IMR-90 (cell line): ENCODE measurements at regions of chr15 and their contacts with region 1.

Region 1: GRCh38 chr15:69853581-69853980 is 244.1 kb downstream of the TLE3 start:
- DNase-seq: peak; percentile 84
- ATAC-seq: peak; percentile 71
- H3K4me3 ChIP-seq: no peak overlapping the region
- H3K27ac ChIP-seq: peak overlapping the region; percentile 73
- H3K4me1 ChIP-seq: peaks cover 24% of the 10 kb centered on the region
- H3K27me3 ChIP-seq: no peaks in the 10 kb centered on the region
- CTCF ChIP-seq: no peak
- POLR2A ChIP-seq: peak; percentile 34; the same call in 1 of the 2 replicates
- RAD21 ChIP-seq: 0 out of 2 replicates have a peak, but pooled peaks have one; percentile 5

Region 2: DNA sequence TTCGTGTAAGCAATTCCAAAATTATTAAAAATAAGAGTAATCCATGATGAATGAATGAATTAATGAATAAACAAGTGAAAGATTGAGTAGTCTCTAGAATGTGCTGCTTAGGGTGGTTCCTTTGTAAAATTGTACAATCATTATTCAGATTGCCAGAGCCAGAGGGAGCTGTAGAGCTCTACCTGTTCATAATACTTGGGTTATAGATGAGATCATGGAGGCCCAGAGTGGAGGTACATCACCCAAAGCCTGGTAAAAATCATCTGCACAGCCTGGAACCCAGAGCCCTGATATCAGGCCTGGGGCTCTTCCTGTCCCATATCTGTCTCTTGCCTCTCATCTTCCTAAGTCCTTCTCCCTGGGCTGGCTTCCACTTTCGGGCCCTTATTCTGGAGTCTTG is 103.8 kb before region 1 on chr15:
- CTCF ChIA-PET with region 1: no interaction called
- POLR2A ChIA-PET with region 1: no interaction called
- dilution Hi-C with region 1: no loop called
- in situ Hi-C with region 1: no loop called
- intact Hi-C with region 1: no loop called
- DNase-seq: no peak
- ATAC-seq: no peak
- H3K4me3 ChIP-seq: no peak overlapping the region
- H3K27ac ChIP-seq: no peak overlapping the region
- H3K4me1 ChIP-seq: no peaks in the 10 kb centered on the region
- H3K27me3 ChIP-seq: peaks cover 47% of the 10 kb centered on the region
- CTCF ChIP-seq: peak; percentile 20; the same call in 1 of the 2 replicates
- POLR2A ChIP-seq: no peak
- RAD21 ChIP-seq: peak; percentile 20; the same call in 1 of the 2 replicates

Region 3: DNA sequence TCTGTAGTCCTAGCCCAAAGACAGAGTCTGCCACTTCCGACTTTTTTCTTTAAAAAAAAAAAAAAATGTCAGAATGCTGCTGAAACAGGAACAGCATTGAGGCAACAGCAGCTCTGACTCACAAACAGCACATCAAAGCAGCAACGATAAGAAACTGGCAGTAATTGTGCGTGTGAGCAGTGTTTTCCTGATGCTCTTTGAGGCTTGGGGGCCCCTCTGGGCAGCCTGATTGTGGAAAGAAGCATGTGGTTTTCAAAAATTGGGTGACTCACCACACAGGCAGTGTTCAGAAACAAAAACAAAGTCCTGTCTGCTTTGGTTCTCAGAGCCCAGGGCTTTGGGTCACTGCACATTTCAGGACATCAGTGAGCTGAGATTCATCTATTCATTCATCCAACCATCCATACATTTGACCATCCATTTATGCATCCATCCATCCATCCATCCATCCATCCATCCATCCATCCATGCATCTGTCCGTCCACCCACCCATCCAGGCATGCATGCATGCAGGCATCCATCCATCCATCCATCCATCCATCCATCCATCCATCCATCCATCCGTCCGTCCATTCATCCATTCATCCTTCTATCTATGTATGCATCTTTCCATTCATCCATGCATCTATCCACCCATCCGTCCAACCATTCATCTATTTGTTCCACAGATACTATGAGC is 92.6 kb before region 1 on chr15:
- CTCF ChIA-PET with region 1: no interaction called
- POLR2A ChIA-PET with region 1: no interaction called
- dilution Hi-C with region 1: no loop called
- in situ Hi-C with region 1: no loop called
- intact Hi-C with region 1: loop called (anchors 2 kb)
- DNase-seq: peak; percentile 99
- ATAC-seq: peak; percentile 90
- H3K4me3 ChIP-seq: no peak overlapping the region
- H3K27ac ChIP-seq: no peak overlapping the region
- H3K4me1 ChIP-seq: peaks cover 12% of the 10 kb centered on the region
- H3K27me3 ChIP-seq: peaks cover 1% of the 10 kb centered on the region
- CTCF ChIP-seq: no peak
- POLR2A ChIP-seq: no peak
- RAD21 ChIP-seq: no peak

Region 4: GRCh38 chr15:69841113-69841828 is 12.3 kb before region 1 on chr15:
- CTCF ChIA-PET with region 1: no interaction called
- POLR2A ChIA-PET with region 1: no interaction called
- dilution Hi-C with region 1: no loop called
- in situ Hi-C with region 1: no loop called
- intact Hi-C with region 1: no loop called
- DNase-seq: no peak
- ATAC-seq: no peak
- H3K4me3 ChIP-seq: no peak overlapping the region
- H3K27ac ChIP-seq: no peak overlapping the region
- H3K4me1 ChIP-seq: no peaks in the 10 kb centered on the region
- H3K27me3 ChIP-seq: peaks cover 19% of the 10 kb centered on the region
- CTCF ChIP-seq: no peak
- POLR2A ChIP-seq: no peak
- RAD21 ChIP-seq: no peak

Region 5: GRCh38 chr15:70165716-70166284 is 312.2 kb after region 1 on chr15:
- CTCF ChIA-PET with region 1: no interaction called
- POLR2A ChIA-PET with region 1: no interaction called
- dilution Hi-C with region 1: no loop called
- in situ Hi-C with region 1: no loop called
- intact Hi-C with region 1: no loop called
- DNase-seq: no peak
- ATAC-seq: no peak
- H3K4me3 ChIP-seq: no peak overlapping the region
- H3K27ac ChIP-seq: no peak overlapping the region
- H3K4me1 ChIP-seq: peaks cover 2% of the 10 kb centered on the region; the same call in 1 of the 2 replicates
- H3K27me3 ChIP-seq: peaks cover 40% of the 10 kb centered on the region
- CTCF ChIP-seq: no peak
- POLR2A ChIP-seq: no peak
- RAD21 ChIP-seq: no peak